ENCODE measurements at regions of chr9 and their contacts with region 1.

Region 1: DNA sequence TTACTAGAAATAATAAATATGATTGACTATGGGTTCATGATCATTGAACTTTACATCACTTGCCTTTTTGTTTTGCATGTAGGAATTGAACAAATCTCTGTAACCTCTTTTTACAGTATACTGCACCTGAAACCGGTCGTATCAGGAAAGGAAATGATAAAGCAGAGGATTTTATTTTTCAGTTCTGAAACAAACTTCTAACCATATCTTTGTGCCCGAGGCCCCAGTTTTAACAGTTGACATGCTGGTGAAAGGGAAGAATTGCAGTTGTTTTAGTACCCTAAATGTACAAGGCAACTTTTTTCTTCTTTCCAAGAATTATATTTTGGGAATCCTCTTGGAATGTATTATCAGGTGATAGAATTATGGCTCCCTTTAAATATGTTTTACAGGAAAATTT is 27.8 kb downstream of the TMEM38B start:
- DNase-seq: no peak

Region 2: GRCh38 chr9:105610381-105610780 is 111.7 kb before region 1 on chr9:
- intact Hi-C with region 1: loop called (anchors 10 kb)
- DNase-seq: no peak